Activated naive CD4-positive, alpha-beta T cell treated with anti-CD3 and anti-CD28 coated beads for 36 hours (primary cell): ENCODE measurements at regions of chr3 and their contacts with region 1.

Region 1: GRCh38 chr3:102053375-102053989 is 204.2 kb downstream of the NFKBIZ start:
- DNase-seq: peak; percentile 56
- H3K4me3 Mint-ChIP-seq: no peak overlapping the region
- H3K27ac Mint-ChIP-seq: no peak overlapping the region
- H3K4me1 Mint-ChIP-seq: peaks cover 33% of the 10 kb centered on the region
- H3K27me3 Mint-ChIP-seq: no peaks in the 10 kb centered on the region

Region 2: DNA sequence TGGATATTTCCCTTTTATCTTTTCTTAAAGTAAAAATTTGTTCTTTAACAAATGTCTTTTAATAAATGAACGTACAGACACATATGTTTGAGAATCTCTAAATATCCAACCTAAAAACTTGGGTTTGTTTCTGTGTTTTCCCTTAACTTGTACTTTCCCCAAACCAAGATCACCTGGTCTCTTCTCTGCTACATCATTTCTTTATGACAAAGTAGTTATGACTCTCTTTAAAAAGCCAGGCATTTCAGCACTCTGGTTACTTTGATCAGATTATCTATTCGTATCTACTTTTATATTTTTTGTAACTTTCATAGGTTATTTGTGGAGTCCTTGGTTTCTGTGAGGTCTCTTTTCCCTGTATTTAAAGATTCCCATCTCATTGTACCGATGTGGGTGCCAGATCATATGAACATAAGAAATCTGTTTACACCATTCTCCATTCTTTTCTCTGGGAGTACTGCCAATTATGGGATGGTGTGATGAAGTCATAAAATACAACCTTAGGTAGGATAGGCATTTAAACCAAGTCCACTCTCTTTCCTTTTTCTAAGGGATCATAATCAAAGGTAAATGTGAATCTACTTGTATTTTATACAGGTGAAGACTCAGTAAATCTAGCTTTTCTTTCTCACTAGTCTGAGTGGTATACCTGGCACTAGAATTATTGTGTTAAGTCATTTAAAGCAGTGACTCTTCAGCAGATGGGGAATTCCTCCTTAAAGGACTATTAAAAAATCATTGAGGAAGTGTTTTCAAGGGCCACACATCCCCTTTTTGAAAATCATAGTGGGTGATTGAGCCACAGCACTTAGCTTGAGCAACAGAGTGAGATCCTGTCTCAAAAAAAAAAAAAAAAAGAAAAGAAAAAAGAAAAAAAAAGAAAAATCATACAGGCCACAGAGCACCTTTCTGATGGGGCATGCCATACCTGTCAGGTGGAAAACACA is 216.6 kb before region 1 on chr3:
- CTCF ChIA-PET with region 1: no interaction called
- intact Hi-C with region 1: no loop called
- DNase-seq: no peak
- H3K4me3 Mint-ChIP-seq: no peak overlapping the region
- H3K27ac Mint-ChIP-seq: no peak overlapping the region
- H3K4me1 Mint-ChIP-seq: peaks cover 64% of the 10 kb centered on the region
- H3K27me3 Mint-ChIP-seq: no peaks in the 10 kb centered on the region

Region 3: DNA sequence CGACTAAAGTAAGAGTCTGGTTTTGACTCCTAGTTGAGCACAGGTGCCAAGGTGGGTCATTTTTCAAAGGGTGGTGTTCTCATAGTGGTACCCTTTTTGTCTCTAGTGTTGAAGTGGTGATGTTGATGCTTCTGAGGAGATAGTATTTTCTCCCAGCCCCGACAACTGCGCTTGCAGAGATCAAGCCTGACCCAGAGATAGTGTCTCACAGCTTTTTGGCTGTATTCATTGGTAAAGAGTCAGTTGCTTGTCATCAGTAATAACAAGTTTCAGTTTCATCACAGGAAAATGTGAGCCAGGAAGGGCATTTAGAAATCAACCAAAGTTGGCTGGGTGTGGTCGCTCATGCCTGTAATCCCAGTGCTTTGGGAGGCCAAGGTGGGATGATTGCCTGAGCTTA is 64.9 kb before region 1 on chr3:
- CTCF ChIA-PET with region 1: no interaction called
- intact Hi-C with region 1: loop called (anchors 1 kb)
- DNase-seq: peak; percentile 31
- H3K4me3 Mint-ChIP-seq: no peak overlapping the region
- H3K27ac Mint-ChIP-seq: no peak overlapping the region
- H3K4me1 Mint-ChIP-seq: peaks cover 21% of the 10 kb centered on the region
- H3K27me3 Mint-ChIP-seq: no peaks in the 10 kb centered on the region

Region 4: DNA sequence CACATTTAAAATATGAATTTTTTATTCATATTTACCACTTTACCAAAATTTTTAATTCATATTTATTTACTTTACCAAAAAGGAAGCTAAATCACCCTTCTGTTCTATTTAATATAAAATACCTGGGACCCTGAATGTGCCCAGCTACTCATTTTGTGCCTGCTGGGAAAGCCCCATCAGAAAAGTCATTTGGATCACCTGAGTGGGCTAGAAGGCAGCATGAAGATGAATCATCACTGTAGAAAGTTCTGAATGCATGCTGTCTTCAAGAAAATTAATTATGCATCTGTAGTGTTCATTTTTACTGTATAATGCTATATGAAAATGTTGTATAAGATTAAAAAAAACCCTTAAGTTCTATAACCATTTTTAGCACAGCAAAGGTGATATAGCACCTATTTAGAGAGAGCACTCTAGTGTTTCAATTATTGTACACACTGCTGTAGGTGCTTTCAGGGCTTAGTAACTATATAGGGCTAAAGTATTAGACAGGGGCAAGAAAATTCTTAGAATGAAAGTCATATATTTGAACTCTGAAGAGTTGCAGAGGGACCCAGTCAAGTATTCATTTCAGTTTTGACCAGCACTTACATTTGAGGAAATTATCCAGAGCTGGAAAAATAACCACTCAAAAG is 29.1 kb before region 1 on chr3:
- CTCF ChIA-PET with region 1: no interaction called
- intact Hi-C with region 1: loop called (anchors 2 kb)
- DNase-seq: peak; percentile 68
- H3K4me3 Mint-ChIP-seq: no peak overlapping the region
- H3K27ac Mint-ChIP-seq: no peak overlapping the region
- H3K4me1 Mint-ChIP-seq: peaks cover 27% of the 10 kb centered on the region
- H3K27me3 Mint-ChIP-seq: no peaks in the 10 kb centered on the region

Region 5: DNA sequence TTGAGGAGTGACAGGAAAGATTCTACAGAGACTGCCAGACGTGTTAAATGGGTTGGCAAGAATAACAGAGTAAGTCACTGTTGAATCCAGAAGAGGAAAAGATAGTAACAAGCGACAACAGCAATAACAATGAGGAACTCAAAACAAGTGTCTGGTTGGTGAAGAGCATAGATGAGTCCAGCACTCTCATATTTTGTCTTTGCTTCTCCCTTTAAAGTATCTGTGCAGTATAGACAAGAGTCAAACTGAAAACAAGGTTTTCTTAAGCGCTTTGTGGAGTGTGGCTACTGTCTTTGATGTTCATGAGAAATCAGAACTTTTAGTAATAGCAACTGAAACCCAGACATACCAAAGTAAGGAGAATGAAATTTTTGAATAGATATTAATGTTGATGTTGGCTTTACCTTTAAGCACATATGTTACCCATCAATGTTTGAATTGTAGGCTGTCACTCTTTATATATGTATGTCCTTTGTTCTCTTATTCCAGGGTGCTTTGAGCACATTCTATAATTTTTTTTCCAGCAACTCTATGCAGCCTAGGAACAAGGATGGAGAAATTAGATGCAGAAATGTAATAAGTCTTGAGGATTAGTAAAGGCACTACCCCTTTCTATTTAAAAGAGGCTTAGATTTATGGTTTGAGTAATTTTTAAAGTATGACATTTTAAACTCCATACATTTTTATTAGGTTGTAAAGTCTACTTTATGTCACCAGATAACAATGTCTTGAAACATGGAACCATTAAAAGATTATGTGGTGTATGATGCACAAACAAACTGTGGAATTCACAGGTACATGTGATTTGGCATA is 18.6 kb before region 1 on chr3:
- CTCF ChIA-PET with region 1: no interaction called
- intact Hi-C with region 1: loop called (anchors 2 kb)
- DNase-seq: no peak
- H3K4me3 Mint-ChIP-seq: no peak overlapping the region
- H3K27ac Mint-ChIP-seq: no peak overlapping the region
- H3K4me1 Mint-ChIP-seq: peaks cover 11% of the 10 kb centered on the region
- H3K27me3 Mint-ChIP-seq: no peaks in the 10 kb centered on the region

Region 6: DNA sequence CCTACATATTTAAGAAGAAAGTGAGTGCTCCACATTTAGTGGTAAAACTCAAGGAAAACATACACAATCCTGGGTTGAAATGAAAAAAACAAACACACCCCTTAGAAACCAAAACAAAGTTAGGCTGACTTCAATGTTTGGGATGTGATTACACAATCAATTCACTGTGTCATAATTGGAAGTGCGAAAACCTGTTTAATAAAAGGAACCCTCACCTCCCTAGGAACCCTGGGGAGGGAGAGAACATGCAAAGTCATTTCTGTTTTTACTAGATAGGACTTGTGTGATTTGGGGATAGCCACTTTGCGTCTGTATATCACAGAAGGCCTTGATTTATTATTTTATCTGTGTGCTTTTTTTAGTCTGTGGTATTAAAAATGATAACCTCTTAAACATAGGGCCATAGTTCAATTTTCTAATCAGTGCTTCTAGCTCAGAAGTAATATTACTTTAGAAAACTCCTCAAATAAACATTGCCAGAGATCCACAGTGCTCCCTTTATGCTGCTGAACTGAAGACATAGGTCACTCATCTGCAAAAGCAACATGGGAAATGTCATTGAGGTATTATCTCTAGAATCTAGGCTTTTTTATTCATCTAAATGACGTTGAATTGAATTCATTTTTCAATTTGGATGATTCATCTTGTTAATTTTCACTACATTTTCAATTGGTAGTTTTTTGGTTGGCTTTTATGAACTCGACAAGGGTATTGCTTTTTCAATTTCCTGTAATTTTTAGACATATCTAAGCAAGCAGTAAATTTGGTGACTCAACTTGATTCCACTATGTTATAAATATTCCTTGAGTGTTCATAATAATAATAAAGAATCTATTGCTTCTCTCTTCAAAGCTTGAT is 71.0 kb after region 1 on chr3:
- CTCF ChIA-PET with region 1: no interaction called
- intact Hi-C with region 1: no loop called
- DNase-seq: no peak
- H3K4me3 Mint-ChIP-seq: no peak overlapping the region
- H3K27ac Mint-ChIP-seq: no peak overlapping the region
- H3K4me1 Mint-ChIP-seq: peaks cover 3% of the 10 kb centered on the region
- H3K27me3 Mint-ChIP-seq: no peaks in the 10 kb centered on the region

Region 7: DNA sequence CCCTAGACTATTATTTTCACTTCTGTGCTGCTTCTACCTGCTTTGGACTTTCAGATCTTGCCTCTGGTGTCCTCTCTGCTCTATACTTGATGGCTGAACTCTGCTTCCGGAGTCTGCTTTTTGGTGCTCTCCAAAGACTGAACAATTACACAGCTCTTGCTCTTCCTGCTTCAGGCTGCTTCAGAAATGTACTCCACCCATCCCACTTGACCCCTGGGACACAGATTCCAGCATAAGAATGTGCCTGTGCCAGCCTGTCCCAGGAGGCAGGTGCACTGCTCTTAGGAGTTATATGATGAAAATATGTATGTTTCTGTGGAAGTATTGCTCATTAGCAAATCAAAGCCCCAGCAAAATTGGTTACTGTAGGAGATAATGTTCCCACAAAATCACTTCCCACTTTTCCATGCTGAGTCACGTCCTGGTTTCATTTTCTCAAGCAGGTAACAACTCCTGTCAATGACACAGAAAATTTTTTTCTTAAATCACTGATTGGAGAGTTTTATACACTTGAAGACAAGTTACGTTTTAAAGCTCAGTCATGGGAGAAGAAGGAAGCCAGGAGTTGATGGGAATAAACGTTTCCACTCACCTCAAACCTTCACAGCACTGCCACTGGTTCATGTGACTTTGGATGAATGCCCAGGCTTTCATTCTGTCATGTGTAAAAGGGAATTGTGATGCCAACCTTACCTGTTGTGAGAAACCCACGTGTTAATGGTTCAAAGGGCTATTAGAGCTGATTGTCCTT is 141.9 kb after region 1 on chr3:
- CTCF ChIA-PET with region 1: no interaction called
- intact Hi-C with region 1: no loop called
- DNase-seq: no peak
- H3K4me3 Mint-ChIP-seq: no peak overlapping the region
- H3K27ac Mint-ChIP-seq: no peak overlapping the region
- H3K4me1 Mint-ChIP-seq: peaks cover 13% of the 10 kb centered on the region
- H3K27me3 Mint-ChIP-seq: no peaks in the 10 kb centered on the region